T-cell (primary cell): ENCODE measurements at regions of chr15 and their contacts with region 1.

Region 1: GRCh38 chr15:48963524-48964113 is at the start of gene SHC4:
- DNase-seq: peak in 2 of 35 experiments; percentile 9 to 50
- ATAC-seq: peak; percentile 39 to 69 (median 62)
- H3K4me3 ChIP-seq: peak within 1 kb of the TSS; percentile 39 to 89
- H3K4me3 Mint-ChIP-seq: peak within 1 kb of the TSS; percentile 63 to 84 (median 75)
- H3K27ac ChIP-seq: no peak within 1 kb of the TSS
- H3K27ac Mint-ChIP-seq: no peak within 1 kb of the TSS
- H3K4me1 ChIP-seq: peaks cover 24 to 29% of the 10 kb centered on the region in 2 experiments
- H3K4me1 Mint-ChIP-seq: peaks cover 31 to 36% (median 33%) of the 10 kb centered on the region in 3 donors
- H3K27me3 ChIP-seq: peaks cover 8 to 34% of the 10 kb centered on the region in 2 experiments
- H3K27me3 Mint-ChIP-seq: peaks cover 34 to 37% of the 10 kb centered on the region in 2 donors
- total RNA-seq, gene SHC4: 0.13 to 0.88 (median 0.19) TPM

Region 2: GRCh38 chr15:48823237-48823636 is 140.4 kb before region 1 on chr15:
- CTCF ChIA-PET with region 1: no interaction called
- POLR2A ChIA-PET with region 1: no interaction called
- DNase-seq: no peak
- ATAC-seq: no peak
- H3K4me3 ChIP-seq: no peak overlapping the region
- H3K4me3 Mint-ChIP-seq: no peak overlapping the region
- H3K27ac ChIP-seq: no peak overlapping the region
- H3K27ac Mint-ChIP-seq: no peak overlapping the region
- H3K4me1 ChIP-seq: no peaks in the 10 kb centered on the region
- H3K4me1 Mint-ChIP-seq: no peaks in the 10 kb centered on the region
- H3K27me3 ChIP-seq: peaks cover 0 to 2% of the 10 kb centered on the region in 2 experiments
- H3K27me3 Mint-ChIP-seq: peaks cover 6 to 10% of the 10 kb centered on the region in 2 donors

Region 3: GRCh38 chr15:48975472-48976419 is 12.1 kb after region 1 on chr15:
- CTCF ChIA-PET with region 1: interaction called, 7 to 22 read pairs
- POLR2A ChIA-PET with region 1: no interaction called
- DNase-seq: peak; percentile 37 to 83 (median 62)
- ATAC-seq: peak; percentile 99
- H3K4me3 ChIP-seq: peak overlapping the region; percentile 49 to 50
- H3K4me3 Mint-ChIP-seq: peak overlapping the region; percentile 44 to 58 (median 46)
- H3K27ac ChIP-seq: no peak overlapping the region
- H3K27ac Mint-ChIP-seq: no peak overlapping the region
- H3K4me1 ChIP-seq: peaks cover 0 to 8% of the 10 kb centered on the region in 2 experiments
- H3K4me1 Mint-ChIP-seq: peaks cover 0 to 3% (median 2%) of the 10 kb centered on the region in 3 donors
- H3K27me3 ChIP-seq: peaks cover 0 to 24% of the 10 kb centered on the region in 2 experiments
- H3K27me3 Mint-ChIP-seq: peaks cover 30 to 34% of the 10 kb centered on the region in 2 donors